Activated T-helper 1 cell treated with anti-CD3 and anti-CD28 coated beads, Interleukin-12 subunit alpha, Interleukin-12 subunit beta, Interleukin-2, Interleukin-4 antibody, amounts not matched to agents 30 ng/mL and 10 ng/mL and 1 ng/mL, durations not matched to agents 14 hours and 24 hours and 36 hours (primary cell): ENCODE measurements at regions of chr1 and their contacts with region 1.

Region 1: DNA sequence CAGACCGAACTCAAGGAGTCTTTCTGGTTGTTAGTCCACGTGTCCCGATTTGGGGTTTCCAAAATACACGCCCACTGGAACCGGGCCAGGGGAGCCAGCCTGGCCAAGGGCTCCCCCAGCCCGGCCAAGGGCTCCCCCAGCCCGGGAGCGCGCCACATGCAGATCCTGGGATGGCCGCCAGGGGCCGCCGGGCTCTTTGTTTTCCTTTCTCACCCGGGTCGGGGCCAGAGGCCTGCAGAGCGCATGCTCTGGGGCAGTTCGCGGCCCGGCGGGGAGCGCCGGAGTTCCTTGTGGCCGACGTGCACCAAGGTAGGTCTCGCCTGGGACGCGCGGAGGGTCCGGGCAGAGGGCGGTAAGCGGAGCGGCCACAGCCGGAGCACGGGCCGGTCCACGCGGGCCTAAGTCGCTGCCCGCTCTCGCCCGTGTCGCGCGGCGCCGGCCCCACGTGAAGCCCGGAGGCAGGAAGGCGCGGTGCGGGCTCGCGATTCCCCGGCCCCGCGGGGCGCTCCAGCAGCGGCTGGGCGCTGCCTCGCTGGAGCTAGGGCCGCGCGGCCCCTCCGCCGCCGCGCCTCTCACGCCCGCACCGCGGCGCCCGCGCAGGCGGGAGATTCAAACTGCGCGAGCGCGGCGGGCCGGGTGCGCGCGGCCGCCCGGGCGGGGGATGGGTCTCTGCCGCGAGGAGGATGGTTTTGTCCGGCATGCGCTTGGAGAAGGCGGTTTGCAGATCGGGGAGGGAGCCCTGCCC is 12.3 kb downstream of the RCC1 start:
- DNase-seq: peak; percentile 86
- H3K4me3 Mint-ChIP-seq: peak overlapping the region; percentile 92
- H3K27ac Mint-ChIP-seq: peak overlapping the region; percentile 92
- H3K4me1 Mint-ChIP-seq: peaks cover 33% of the 10 kb centered on the region
- H3K27me3 Mint-ChIP-seq: no peaks in the 10 kb centered on the region

Region 2: DNA sequence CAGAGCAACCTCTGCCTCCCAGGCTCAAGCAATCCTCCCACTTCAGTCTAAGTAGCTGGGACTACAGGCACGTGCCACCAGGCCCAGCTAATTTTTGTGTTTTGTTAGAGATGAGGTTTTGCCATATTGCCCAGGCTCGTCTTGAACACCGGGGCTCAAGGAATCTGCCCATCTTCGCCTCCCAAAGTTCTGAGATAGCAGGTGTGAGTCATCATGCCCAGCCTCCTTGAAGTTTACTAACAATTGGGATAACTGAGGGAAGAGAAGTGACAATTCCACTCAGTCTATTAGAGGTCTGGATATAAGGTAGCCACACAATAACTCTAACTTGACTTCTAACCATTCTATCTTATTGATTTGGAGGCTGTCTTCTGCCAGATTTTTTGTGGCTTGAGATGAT is 18.6 kb before region 1 on chr1:
- intact Hi-C with region 1: no loop called
- DNase-seq: no peak
- H3K4me3 Mint-ChIP-seq: no peak overlapping the region
- H3K27ac Mint-ChIP-seq: no peak overlapping the region
- H3K4me1 Mint-ChIP-seq: no peaks in the 10 kb centered on the region
- H3K27me3 Mint-ChIP-seq: no peaks in the 10 kb centered on the region

Region 3: DNA sequence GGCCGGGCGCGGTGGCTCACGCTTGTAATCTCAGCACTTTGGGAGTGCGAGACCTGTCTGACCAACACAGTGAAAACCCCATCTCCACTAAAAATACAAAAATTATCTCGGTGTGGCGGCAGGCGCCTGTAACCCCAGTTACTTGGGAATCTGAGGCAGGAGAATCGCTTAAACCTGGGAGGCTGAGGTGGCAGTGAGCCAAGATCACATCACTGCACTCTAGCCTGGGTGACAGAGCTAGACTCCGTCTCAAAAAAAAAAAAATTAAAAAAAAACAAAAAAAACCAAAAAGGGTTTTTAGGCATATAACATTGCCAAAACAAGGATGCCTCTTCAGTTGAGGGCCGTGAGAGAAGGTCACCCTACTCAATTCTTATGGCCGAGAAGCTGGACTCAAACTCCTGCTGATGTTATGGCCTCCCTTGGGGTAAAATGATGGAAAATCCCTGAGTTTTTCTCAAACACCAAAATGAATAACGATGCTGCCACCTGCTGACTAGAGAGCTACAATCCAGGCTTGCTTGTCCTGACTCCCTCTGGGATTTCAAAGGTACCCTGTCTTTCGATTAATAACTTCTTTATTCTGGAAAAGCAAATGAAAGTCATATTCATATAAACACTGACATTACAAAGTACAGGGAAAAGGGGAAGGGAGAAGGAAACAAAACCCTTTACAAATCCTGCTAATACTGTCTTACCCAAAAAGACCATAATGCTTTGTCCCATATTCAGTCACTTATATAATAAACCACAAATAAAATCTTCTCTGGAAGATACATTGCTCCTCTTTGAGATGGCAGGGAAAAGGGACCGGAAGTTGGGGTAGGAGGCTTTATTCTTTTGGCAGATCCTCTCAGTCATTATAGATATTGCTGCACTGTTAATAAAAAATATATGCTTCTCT is 84.6 kb after region 1 on chr1:
- intact Hi-C with region 1: loop called (anchors 2 kb)
- DNase-seq: no peak
- H3K4me3 Mint-ChIP-seq: no peak overlapping the region
- H3K27ac Mint-ChIP-seq: no peak overlapping the region
- H3K4me1 Mint-ChIP-seq: peaks cover 23% of the 10 kb centered on the region
- H3K27me3 Mint-ChIP-seq: no peaks in the 10 kb centered on the region

Region 4: GRCh38 chr1:28642847-28643635 is 124.9 kb after region 1 on chr1 and contains the start of gene TAF12:
- intact Hi-C with region 1: loop called (anchors 2 kb)
- DNase-seq: peak; percentile 85
- H3K4me3 Mint-ChIP-seq: peak within 1 kb of the TSS; percentile 99
- H3K27ac Mint-ChIP-seq: peak within 1 kb of the TSS; percentile 99
- H3K4me1 Mint-ChIP-seq: peaks cover 55% of the 10 kb centered on the region
- H3K27me3 Mint-ChIP-seq: no peaks in the 10 kb centered on the region
- total RNA-seq, gene TAF12: 32.8 and 33.9 TPM in 2 replicates

Region 5: DNA sequence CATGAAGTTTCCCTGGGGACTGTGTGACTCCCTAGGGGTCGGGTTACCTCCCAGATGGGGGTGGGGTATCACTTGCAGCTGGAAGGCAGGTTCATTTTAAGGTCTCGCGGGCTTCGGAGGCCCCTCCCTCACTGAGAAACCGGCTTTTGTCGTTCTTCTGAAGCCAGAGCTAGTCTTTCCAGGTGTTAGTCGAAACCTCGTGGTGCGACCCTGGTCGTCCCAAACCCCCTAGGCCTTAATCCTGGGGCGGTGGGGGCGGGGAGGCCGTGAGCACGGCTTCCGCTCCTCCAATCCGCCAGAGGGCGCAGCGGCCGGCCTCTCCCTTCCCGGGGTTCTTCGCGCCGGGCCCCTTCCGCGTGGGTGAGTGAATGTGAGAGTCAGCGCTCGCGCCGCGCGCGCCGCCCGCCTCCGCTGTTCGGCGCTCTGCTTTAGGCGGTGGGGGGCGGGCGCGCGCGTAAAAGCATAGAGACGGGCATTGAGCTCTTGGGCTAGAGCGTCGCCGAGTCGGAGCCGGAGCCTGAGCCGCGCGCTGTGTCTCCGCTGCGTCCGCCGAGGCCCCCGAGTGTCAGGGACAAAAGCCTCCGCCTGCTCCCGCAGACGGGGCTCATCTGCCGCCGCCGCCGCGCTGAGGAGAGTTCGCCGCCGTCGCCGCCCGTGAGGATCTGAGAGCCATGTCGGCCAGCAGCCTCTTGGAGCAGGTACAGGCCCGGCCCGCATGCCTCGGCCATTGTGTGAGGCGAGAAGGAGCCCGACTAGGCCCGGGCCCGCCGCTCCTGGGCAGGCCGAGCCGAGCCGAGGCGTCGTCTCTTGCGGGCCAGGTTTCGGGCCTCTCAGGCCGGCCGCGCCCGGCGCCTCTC is 218.5 kb after region 1 on chr1 and contains the start of gene YTHDF2:
- intact Hi-C with region 1: loop called (anchors 5 kb)
- DNase-seq: peak; percentile 96
- H3K4me3 Mint-ChIP-seq: peak within 1 kb of the TSS; percentile 96
- H3K27ac Mint-ChIP-seq: peak within 1 kb of the TSS; percentile 93
- H3K4me1 Mint-ChIP-seq: peaks cover 27% of the 10 kb centered on the region
- H3K27me3 Mint-ChIP-seq: no peaks in the 10 kb centered on the region
- total RNA-seq, gene YTHDF2: 91.7 and 94.9 TPM in 2 replicates

Region 6: DNA sequence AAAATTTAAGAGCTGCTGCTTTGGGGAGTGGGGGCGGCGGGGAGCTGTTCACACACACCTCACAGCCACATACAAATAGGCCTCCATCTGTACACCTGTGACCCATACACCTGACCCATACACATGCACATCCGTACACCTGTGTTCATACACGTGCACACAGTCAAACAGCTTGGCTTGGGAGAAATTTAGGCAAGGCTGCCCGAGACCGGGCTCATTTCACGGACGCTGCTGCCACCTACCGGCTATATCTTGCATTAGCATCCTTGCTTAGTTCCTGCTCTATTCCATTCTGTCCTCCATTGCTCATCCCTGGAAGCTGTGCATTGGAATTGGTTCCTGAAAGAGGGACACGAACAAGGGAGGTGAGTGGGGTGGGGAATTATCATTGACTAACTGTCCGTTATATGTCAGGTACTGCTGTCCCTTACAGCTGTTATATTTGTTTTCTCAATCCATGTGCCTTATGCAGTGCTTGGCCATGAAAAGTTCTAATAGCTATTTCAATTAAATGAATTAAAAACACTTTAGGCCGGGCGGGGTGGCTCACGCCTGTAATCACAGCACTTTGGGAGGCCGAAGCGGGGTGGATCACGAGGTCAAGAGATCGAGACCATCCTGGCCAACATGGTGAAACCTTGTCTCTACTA is 359.1 kb after region 1 on chr1:
- intact Hi-C with region 1: loop called (anchors 1 kb)
- DNase-seq: peak; percentile 54
- H3K4me3 Mint-ChIP-seq: no peak overlapping the region
- H3K27ac Mint-ChIP-seq: no peak overlapping the region
- H3K4me1 Mint-ChIP-seq: peaks cover 11% of the 10 kb centered on the region
- H3K27me3 Mint-ChIP-seq: peaks cover 5% of the 10 kb centered on the region

Region 7: GRCh38 chr1:29062157-29062942 is 544.2 kb after region 1 on chr1:
- intact Hi-C with region 1: loop called (anchors 2 kb)
- DNase-seq: no peak
- H3K4me3 Mint-ChIP-seq: peak overlapping the region; percentile 46
- H3K27ac Mint-ChIP-seq: peak overlapping the region; percentile 97
- H3K4me1 Mint-ChIP-seq: peaks cover 23% of the 10 kb centered on the region
- H3K27me3 Mint-ChIP-seq: no peaks in the 10 kb centered on the region